ENCODE measurements at regions of chr2 and their contacts with region 1.

Region 1: GRCh38 chr2:201182650-201183364 is at the start of gene CASP10:
- DNase-seq: peak in 1 of 5 donors; percentile 23
- ATAC-seq: peak; percentile 52 to 88 (median 74)
- H3K4me3 ChIP-seq: peak within 1 kb of the TSS; percentile 12 to 73 (median 61)
- H3K27ac ChIP-seq: peak within 1 kb of the TSS; percentile 33 to 92 (median 74)
- H3K4me1 ChIP-seq: peaks cover 0 to 49% (median 1%) of the 10 kb centered on the region in 12 donors
- H3K27me3 ChIP-seq: no peaks in the 10 kb centered on the region
- CTCF ChIP-seq: peak in 11 of 12 donors; percentile 2 to 69 (median 53)
- POLR2A ChIP-seq: peak in 1 of 2 donors; percentile 42
- total RNA-seq, gene CASP10: 4.3 to 24.0 (median 5.8) TPM

Region 2: DNA sequence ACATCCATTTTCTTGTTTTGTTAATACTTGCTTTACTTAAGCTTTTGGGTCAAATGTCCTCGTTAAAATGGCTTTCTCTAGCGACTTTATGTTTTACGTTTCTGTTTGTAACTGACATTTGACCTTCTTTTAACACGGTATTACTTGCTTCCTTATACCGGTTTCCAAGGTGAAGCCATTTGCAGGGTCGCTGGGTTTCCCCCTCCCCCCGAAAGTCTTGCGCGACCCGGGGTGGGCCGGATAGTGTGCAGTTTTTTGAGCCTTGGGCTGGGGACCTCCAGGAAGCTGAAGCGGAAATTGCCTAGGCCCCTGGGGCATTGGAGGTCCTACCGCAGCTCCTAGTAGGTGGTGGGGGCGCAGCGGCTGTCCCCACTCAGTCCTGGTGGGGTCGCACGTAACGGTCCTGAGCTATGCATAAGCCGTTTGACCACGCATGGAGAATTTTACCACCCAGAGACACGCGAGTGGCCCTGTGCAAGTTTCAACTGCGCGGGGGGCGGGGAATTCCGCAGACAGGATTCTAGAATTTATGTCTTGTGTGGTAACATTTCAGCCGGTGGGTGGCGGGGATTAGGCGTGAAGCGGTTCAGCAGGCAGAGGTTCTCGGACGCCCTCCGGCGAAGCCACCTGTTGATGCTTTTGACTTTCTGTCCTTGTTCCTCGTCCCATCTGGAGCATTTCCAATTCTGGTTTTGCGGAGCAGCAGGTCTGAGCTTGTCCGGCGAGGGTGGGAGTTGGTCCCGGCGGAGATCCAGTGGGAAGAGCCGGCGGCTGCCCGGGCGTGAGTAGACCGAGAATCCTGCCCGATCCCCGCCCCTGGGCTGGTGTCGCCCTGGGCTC is 64.5 kb before region 1 on chr2:
- intact Hi-C with region 1: no loop called
- DNase-seq: peak; percentile 91 to 95 (median 92)
- ATAC-seq: peak; percentile 44 to 75 (median 52)
- H3K4me3 ChIP-seq: peak overlapping the region; percentile 65 to 99 (median 85)
- H3K27ac ChIP-seq: peak overlapping the region; percentile 94 to 100 (median 100)
- H3K4me1 ChIP-seq: peaks cover 0 to 55% (median 30%) of the 10 kb centered on the region in 12 donors
- H3K27me3 ChIP-seq: no peaks in the 10 kb centered on the region
- CTCF ChIP-seq: peak; percentile 19 to 65 (median 51)
- POLR2A ChIP-seq: peak in 1 of 2 donors; percentile 71

Region 3: DNA sequence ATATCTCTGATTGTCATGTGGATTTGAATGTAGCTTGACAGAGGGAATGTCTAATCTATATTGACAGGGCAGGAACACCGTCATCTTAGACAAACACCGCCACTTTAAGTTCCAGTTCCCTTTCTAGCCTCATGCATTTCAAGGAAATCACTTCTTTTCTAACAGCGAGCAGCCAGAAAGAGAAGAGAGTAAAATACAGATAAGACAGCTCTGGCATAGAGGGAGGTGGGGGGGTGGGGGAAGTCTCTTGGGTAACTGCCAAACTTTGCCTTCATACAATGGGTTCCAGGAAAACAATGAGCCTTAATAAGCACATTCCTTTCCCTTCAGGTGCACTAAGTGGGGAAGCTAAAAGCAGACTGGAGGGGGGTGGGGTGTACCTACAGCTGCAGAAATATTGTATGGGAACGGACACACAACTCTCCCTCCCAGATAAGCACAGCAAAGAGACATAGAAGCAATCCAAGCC is 37.3 kb after region 1 on chr2:
- intact Hi-C with region 1: loop called in 3 of 10 experiments (anchors 5 kb)
- DNase-seq: peak in 2 of 5 donors; percentile 58 to 60
- ATAC-seq: peak; percentile 57 to 78 (median 71)
- H3K4me3 ChIP-seq: no peak overlapping the region
- H3K27ac ChIP-seq: peak overlapping the region in 10 of 12 donors; percentile 4 to 84 (median 52)
- H3K4me1 ChIP-seq: peaks cover 2 to 37% (median 24%) of the 10 kb centered on the region in 12 donors
- H3K27me3 ChIP-seq: no peaks in the 10 kb centered on the region
- CTCF ChIP-seq: no peak
- POLR2A ChIP-seq: no peak